Ascending aorta (tissue), 2 donors: ENCODE measurements at regions of chr14 and their contacts with region 1.

Region 1: DNA sequence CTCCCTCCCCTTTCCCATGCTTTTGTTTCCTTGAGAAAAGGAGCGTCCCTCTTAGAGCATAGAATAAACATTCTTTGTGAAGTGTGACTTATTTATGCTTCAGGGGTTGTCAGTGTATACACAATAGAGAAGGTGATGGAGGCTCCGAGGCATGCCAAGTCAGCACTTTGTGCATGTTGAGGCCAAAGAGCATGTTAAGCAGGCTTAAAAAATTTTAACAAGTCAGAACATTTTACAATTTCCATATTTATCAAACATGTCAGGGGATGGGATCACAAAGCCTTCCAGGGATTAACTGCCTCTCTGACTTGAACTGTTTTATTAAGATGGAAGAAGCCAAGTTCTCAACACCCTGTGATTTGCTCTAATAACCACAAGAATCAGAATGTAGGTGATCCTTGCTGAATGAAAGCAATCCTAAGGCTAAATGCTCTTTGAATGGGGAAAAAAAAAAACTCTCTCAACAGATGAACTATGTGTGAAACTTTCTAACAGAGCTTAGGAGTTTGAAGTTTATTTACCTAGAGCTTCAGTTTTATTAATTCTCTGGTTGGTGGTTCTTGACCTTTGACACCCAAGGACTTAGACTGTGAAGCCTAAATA is 223.1 kb downstream of the RAD51B start:
- DNase-seq: no peak
- H3K4me3 ChIP-seq: no peak overlapping the region
- H3K27ac ChIP-seq: peak overlapping the region; percentile 59 to 71
- H3K4me1 ChIP-seq: peaks cover 7 to 26% of the 10 kb centered on the region in 2 donors
- H3K27me3 ChIP-seq: no peaks in the 10 kb centered on the region
- CTCF ChIP-seq: no peak

Region 2: GRCh38 chr14:67963960-67964744 is 78.6 kb before region 1 on chr14:
- intact Hi-C with region 1: no loop called
- DNase-seq: no peak
- H3K4me3 ChIP-seq: peak overlapping the region; percentile 1 to 33
- H3K27ac ChIP-seq: no peak overlapping the region
- H3K4me1 ChIP-seq: peaks cover 0 to 6% of the 10 kb centered on the region in 2 donors
- H3K27me3 ChIP-seq: no peaks in the 10 kb centered on the region
- CTCF ChIP-seq: no peak

Region 3: GRCh38 chr14:68131907-68132306 is 89.2 kb after region 1 on chr14:
- intact Hi-C with region 1: loop called (anchors 5 kb)
- DNase-seq: no peak
- H3K4me3 ChIP-seq: no peak overlapping the region
- H3K27ac ChIP-seq: peak overlapping the region; percentile 8 to 51
- H3K4me1 ChIP-seq: peaks cover 0 to 6% of the 10 kb centered on the region in 2 donors
- H3K27me3 ChIP-seq: no peaks in the 10 kb centered on the region
- CTCF ChIP-seq: no peak